Panc1 (cell line): ENCODE measurements at regions of chr7 and their contacts with region 1.

Region 1: GRCh38 chr7:75072978-75073282 is 672 bp downstream of the RCC1L start:
- DNase-seq: no peak
- ATAC-seq: peak; percentile 35; the same call in 1 of the 2 replicates
- H3K4me3 ChIP-seq: peak overlapping the region; percentile 92 to 98
- H3K27ac ChIP-seq: peak overlapping the region; percentile 92
- H3K4me1 ChIP-seq: peaks cover 4% of the 10 kb centered on the region; the same call in 1 of the 2 replicates
- H3K27me3 ChIP-seq: no peaks in the 10 kb centered on the region
- CTCF ChIP-seq: no peak

Region 2: GRCh38 chr7:75024922-75025321 is 48.0 kb before region 1 on chr7:
- CTCF ChIA-PET with region 1: no interaction called
- POLR2A ChIA-PET with region 1: no interaction called
- in situ Hi-C with region 1: no loop called
- intact Hi-C with region 1: no loop called
- DNase-seq: no peak
- ATAC-seq: no peak
- H3K4me3 ChIP-seq: no peak overlapping the region
- H3K27ac ChIP-seq: no peak overlapping the region
- H3K4me1 ChIP-seq: no peaks in the 10 kb centered on the region
- H3K27me3 ChIP-seq: no peaks in the 10 kb centered on the region
- CTCF ChIP-seq: no peak

Region 3: DNA sequence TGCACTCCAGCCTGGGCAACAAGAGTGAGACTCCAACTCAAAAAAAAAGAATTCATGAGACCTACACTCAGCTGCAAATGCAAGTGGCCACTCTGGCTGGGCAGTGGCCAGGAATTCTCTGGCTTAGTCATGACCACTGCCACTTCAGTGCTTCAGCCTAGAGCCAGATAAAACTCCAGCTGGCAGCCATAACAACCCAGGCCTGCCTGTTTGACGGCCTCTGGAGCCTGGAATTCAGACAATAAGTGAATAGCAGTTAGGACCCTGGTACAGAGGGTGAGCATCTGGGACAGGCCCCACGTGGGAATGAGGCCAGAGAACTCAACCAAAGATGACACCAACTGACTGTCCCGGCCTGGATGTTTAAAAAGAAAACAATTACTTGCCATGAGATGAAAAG is 18.2 kb before region 1 on chr7:
- CTCF ChIA-PET with region 1: no interaction called
- POLR2A ChIA-PET with region 1: interaction called, 20 read pairs
- in situ Hi-C with region 1: no loop called
- intact Hi-C with region 1: no loop called
- DNase-seq: no peak
- ATAC-seq: 0 out of 2 replicates have a peak, but pooled peaks have one; percentile 27
- H3K4me3 ChIP-seq: no peak overlapping the region
- H3K27ac ChIP-seq: no peak overlapping the region
- H3K4me1 ChIP-seq: no peaks in the 10 kb centered on the region
- H3K27me3 ChIP-seq: no peaks in the 10 kb centered on the region
- CTCF ChIP-seq: no peak